ENCODE measurements at regions of chr2 and their contacts with region 1.

Region 1: GRCh38 chr2:55168221-55169154 is 63.6 kb downstream of the CLHC1 start:
- DNase-seq: peak; percentile 70
- H3K4me3 ChIP-seq: no peak overlapping the region
- H3K27ac ChIP-seq: peak overlapping the region; percentile 6
- H3K27me3 ChIP-seq: no peaks in the 10 kb centered on the region
- CTCF ChIP-seq: peak; percentile 84

Region 2: GRCh38 chr2:54899576-54900200 is 268.8 kb before region 1 on chr2:
- in situ Hi-C with region 1: loop called (anchors 25 kb)
- DNase-seq: peak; percentile 43
- H3K4me3 ChIP-seq: no peak overlapping the region
- H3K27ac ChIP-seq: no peak overlapping the region
- H3K27me3 ChIP-seq: no peaks in the 10 kb centered on the region
- CTCF ChIP-seq: peak; percentile 76

Region 3: DNA sequence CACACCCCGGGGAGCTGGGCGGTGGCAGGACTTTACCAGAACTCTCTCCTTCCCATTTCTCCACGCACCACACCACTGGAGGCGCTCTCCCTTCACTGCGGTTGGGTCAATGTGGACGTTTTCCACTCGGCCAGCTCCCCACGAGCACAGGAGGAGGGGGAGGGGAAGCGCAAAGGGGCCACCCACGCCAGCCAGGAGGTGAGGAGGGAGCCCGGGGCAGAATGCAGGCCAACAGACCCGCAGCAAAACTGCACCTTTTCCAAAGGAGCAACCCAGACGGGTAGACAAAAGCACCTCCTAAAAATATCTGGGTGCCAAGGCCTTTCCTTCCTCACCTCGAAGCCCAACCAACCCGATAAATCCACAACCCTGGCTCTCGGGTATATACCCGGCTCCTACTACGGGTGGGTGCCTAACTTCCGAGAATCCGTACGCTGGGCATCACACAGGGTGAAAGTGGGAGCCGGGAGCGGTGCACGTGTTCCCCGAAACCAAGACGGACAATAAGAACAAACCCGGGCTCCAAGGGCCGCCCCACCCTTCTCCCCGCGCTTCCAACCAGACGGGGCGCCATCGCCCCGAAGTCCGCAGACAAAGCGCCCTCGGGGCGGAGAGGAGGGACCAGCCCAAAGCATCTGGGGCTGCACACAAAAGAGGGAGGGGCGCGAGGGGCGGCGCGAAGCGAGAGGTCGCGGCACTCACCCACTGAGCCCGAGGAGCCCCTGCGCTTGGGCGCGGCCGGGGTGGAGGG is 119.3 kb before region 1 on chr2:
- in situ Hi-C with region 1: loop called (anchors 25 kb)
- DNase-seq: peak; percentile 72
- H3K4me3 ChIP-seq: peak overlapping the region; percentile 93
- H3K27ac ChIP-seq: peak overlapping the region; percentile 99
- H3K27me3 ChIP-seq: no peaks in the 10 kb centered on the region
- CTCF ChIP-seq: peak; percentile 85

Region 4: DNA sequence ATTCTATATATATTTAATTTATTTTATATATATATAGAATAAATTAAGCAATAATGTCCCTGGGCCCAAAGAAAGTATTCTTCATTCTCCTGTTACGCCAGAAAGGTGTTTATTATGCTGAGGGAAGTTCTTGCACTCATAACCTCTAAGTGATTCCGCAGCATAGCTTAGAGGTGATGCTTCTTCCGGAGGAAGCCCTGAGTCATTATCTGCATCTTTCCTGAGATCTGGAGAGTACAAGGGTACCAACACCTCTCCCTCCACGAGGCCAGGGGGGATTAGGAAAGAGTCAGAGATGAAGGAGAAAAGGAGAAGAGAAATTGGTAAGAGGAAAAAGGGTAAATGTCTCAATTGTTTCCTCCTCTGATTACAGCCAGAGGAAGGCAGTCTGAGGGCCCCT is 75.1 kb before region 1 on chr2:
- in situ Hi-C with region 1: no loop called
- DNase-seq: peak; percentile 68
- H3K4me3 ChIP-seq: no peak overlapping the region
- H3K27ac ChIP-seq: no peak overlapping the region
- H3K27me3 ChIP-seq: no peaks in the 10 kb centered on the region
- CTCF ChIP-seq: no peak

Region 5: GRCh38 chr2:55282110-55282917 is 113.8 kb after region 1 on chr2:
- in situ Hi-C with region 1: no loop called
- DNase-seq: peak; percentile 83
- H3K4me3 ChIP-seq: peak overlapping the region; percentile 78
- H3K27ac ChIP-seq: peak overlapping the region; percentile 73
- H3K27me3 ChIP-seq: no peaks in the 10 kb centered on the region
- CTCF ChIP-seq: no peak

Region 6: DNA sequence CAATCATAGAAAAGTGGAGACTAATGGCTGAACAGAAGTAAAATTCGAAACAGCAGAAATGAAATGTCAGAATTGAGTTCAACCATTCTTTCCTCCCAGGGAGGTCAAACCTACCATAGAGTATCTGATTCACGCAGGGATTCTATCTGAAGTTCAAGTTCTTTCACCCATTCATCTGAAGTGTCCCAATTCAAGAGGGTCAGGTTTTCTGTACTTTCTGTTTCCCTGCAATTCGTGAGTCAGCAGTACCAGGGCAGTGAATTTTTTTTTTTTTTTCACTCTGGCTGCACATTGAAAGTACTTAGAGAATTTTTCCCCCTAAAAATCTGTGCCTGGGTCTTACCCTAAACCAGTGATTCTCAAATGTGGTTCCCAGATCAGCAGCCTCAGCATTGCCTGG is 292.1 kb after region 1 on chr2:
- in situ Hi-C with region 1: no loop called
- DNase-seq: no peak
- H3K4me3 ChIP-seq: no peak overlapping the region
- H3K27ac ChIP-seq: no peak overlapping the region
- H3K27me3 ChIP-seq: no peaks in the 10 kb centered on the region
- CTCF ChIP-seq: no peak

Region 7: DNA sequence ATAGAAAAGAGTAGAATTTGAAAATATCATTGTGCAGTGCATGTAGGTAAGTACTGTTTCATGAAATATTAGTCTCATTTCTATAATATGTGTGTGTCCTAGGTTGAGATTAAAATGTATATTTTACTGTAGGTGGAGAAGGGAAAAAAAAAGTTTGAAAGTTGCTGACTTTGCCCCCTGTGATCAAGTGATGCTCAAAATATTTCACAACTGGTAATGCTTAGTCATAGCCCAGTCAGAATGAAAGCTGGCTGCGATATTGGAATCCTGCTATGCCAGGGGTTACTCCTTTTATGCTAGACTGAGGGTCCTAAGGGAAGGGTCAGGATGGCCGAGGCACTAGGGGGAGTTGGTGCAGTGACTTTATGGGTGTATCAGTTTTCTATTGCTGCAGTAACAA is 331.5 kb after region 1 on chr2:
- in situ Hi-C with region 1: no loop called
- DNase-seq: peak; percentile 40
- H3K4me3 ChIP-seq: no peak overlapping the region
- H3K27ac ChIP-seq: no peak overlapping the region
- H3K27me3 ChIP-seq: no peaks in the 10 kb centered on the region
- CTCF ChIP-seq: no peak

Measured in brain microvascular endothelial cell (primary cell).